ENCODE measurements at regions of chr6 and their contacts with region 1.

Region 1: GRCh38 chr6:137767911-137768690 is 99.0 kb upstream of the TNFAIP3 start:
- DNase-seq: no peak
- ATAC-seq: peak; percentile 71
- H3K4me3 Mint-ChIP-seq: peak overlapping the region; percentile 45
- H3K27ac Mint-ChIP-seq: peak overlapping the region; percentile 75
- H3K4me1 Mint-ChIP-seq: peaks cover 37% of the 10 kb centered on the region
- H3K27me3 Mint-ChIP-seq: no peaks in the 10 kb centered on the region
- CTCF ChIP-seq: no peak

Region 2: DNA sequence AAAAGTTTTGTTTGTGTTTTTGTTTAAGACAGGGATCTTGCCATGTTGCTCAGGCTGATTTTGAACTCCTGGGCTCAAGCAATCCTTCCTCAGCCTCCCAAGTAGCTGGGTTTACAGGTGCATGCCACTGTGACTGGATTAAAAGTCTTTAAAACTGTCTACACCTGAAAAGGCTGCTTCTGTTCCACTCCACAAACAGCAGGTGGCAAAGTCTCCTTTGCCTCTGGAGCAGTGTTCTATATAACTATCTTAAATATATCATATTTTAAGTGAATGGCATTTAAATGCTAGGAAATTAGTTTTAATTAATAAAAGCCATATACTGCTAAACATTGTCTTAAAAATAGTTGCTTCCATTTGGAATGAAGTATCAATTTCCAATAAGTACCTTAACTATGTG is 1389.2 kb before region 1 on chr6:
- CTCF ChIA-PET with region 1: no interaction called
- POLR2A ChIA-PET with region 1: no interaction called
- intact Hi-C with region 1: no loop called
- DNase-seq: no peak
- ATAC-seq: no peak
- H3K4me3 Mint-ChIP-seq: no peak overlapping the region
- H3K27ac Mint-ChIP-seq: no peak overlapping the region
- H3K4me1 Mint-ChIP-seq: no peaks in the 10 kb centered on the region
- H3K27me3 Mint-ChIP-seq: no peaks in the 10 kb centered on the region
- CTCF ChIP-seq: no peak

Region 3: DNA sequence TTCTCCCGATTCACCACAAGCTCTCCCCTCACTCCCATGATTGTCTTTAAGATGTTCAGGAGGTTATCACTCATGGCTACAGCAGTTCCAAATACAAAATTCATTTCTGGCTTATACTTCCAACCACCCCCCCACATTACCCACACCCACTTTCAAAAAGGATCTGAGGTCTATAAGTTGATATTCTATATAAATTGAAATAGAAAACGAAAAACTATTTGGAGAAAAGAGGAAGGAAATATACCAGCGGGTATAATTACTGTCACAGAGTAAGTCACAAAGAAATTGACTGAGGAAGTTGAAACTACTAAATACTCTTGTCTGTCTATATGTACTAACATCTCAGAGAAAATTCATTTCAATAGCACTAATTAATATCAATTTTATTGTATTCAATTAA is 13.7 kb before region 1 on chr6:
- CTCF ChIA-PET with region 1: no interaction called
- POLR2A ChIA-PET with region 1: no interaction called
- intact Hi-C with region 1: loop called (anchors 2 kb)
- DNase-seq: no peak
- ATAC-seq: peak; percentile 76
- H3K4me3 Mint-ChIP-seq: peak overlapping the region; percentile 39
- H3K27ac Mint-ChIP-seq: peak overlapping the region; percentile 78
- H3K4me1 Mint-ChIP-seq: peaks cover 43% of the 10 kb centered on the region
- H3K27me3 Mint-ChIP-seq: no peaks in the 10 kb centered on the region
- CTCF ChIP-seq: no peak

Region 4: GRCh38 chr6:137791281-137792159 is 23.4 kb after region 1 on chr6:
- CTCF ChIA-PET with region 1: no interaction called
- POLR2A ChIA-PET with region 1: no interaction called
- intact Hi-C with region 1: loop called (anchors 2 kb)
- DNase-seq: no peak
- ATAC-seq: no peak
- H3K4me3 Mint-ChIP-seq: no peak overlapping the region
- H3K27ac Mint-ChIP-seq: peak overlapping the region; percentile 68
- H3K4me1 Mint-ChIP-seq: peaks cover 42% of the 10 kb centered on the region
- H3K27me3 Mint-ChIP-seq: no peaks in the 10 kb centered on the region
- CTCF ChIP-seq: no peak